Activated B cell treated with CpG ODN at 0.5 μM for 24 hours (primary cell): ENCODE measurements at regions of chr11 and their contacts with region 1.

Region 1: DNA sequence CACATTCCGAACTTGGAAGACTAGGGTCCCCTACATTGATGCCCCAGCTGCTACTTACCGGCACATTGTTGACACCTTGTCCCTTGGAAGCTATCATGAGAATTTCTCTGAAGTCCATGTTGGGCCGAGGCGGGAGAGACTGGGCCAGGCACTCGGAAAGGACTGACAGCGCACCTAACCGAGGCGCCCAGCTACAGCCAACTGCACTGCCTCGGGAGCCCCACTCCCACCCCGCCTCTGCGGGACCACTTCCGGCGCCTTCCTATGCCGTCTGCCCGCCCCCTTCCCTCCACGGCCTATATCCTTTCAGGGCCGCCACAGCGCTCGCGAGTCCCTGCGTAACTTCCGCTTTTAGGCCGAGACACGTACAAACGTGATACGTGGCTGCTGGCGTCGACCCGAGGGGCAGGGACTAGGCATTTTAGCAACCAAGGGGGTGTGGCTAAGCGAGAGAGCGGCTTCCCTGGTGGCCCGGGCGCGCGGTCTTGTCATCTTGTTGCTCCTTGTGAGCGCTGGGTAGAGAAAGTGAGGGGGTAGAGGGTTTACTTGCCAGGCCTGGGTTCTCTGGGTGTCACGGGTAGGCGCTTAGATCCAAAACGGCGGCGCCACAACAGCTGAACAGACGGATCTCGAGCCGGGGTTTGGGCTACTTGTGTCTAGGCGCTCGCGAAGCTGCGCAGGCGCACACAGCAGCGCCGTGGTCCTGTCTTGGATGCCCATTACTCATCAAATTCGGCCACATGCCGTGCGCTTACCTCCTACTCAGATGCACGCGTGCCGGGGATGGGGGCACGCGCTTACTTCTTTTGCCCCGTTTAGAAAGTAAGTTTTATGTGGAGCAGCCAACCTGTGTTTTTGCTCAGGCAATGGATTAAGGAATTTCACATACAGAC is at the start of gene SPTY2D1:
- DNase-seq: peak; percentile 87
- ATAC-seq: peak; percentile 93
- H3K4me3 Mint-ChIP-seq: peak within 1 kb of the TSS; percentile 99
- H3K27ac Mint-ChIP-seq: peak within 1 kb of the TSS; percentile 97
- H3K4me1 Mint-ChIP-seq: peaks cover 25% of the 10 kb centered on the region
- H3K27me3 Mint-ChIP-seq: peaks cover 3% of the 10 kb centered on the region
- CTCF ChIP-seq: no peak
- total RNA-seq, gene SPTY2D1: 22.0 and 22.7 TPM in 2 replicates

Region 2: GRCh38 chr11:16738193-16738946 is 1896.0 kb before region 1 on chr11 and contains the start of gene C11orf58:
- CTCF ChIA-PET with region 1: no interaction called
- POLR2A ChIA-PET with region 1: no interaction called
- intact Hi-C with region 1: loop called (anchors 1 kb)
- DNase-seq: peak; percentile 86
- ATAC-seq: peak; percentile 97
- H3K4me3 Mint-ChIP-seq: peak within 1 kb of the TSS; percentile 74
- H3K27ac Mint-ChIP-seq: no peak within 1 kb of the TSS
- H3K4me1 Mint-ChIP-seq: peaks cover 21% of the 10 kb centered on the region
- H3K27me3 Mint-ChIP-seq: no peaks in the 10 kb centered on the region
- CTCF ChIP-seq: no peak
- total RNA-seq, gene C11orf58: 112 and 130 TPM in 2 replicates

Region 3: GRCh38 chr11:18105802-18106574 is 528.4 kb before region 1 on chr11 and contains the start of gene SAAL1:
- CTCF ChIA-PET with region 1: interaction called, 3 read pairs
- POLR2A ChIA-PET with region 1: interaction called, 3 read pairs
- intact Hi-C with region 1: loop called (anchors 2 kb)
- DNase-seq: peak; percentile 91
- ATAC-seq: peak; percentile 97
- H3K4me3 Mint-ChIP-seq: peak within 1 kb of the TSS; percentile 91
- H3K27ac Mint-ChIP-seq: peak within 1 kb of the TSS; percentile 76
- H3K4me1 Mint-ChIP-seq: peaks cover 28% of the 10 kb centered on the region
- H3K27me3 Mint-ChIP-seq: peaks cover 14% of the 10 kb centered on the region
- CTCF ChIP-seq: no peak
- total RNA-seq, gene SAAL1: 34.4 and 39.7 TPM in 2 replicates

Region 4: DNA sequence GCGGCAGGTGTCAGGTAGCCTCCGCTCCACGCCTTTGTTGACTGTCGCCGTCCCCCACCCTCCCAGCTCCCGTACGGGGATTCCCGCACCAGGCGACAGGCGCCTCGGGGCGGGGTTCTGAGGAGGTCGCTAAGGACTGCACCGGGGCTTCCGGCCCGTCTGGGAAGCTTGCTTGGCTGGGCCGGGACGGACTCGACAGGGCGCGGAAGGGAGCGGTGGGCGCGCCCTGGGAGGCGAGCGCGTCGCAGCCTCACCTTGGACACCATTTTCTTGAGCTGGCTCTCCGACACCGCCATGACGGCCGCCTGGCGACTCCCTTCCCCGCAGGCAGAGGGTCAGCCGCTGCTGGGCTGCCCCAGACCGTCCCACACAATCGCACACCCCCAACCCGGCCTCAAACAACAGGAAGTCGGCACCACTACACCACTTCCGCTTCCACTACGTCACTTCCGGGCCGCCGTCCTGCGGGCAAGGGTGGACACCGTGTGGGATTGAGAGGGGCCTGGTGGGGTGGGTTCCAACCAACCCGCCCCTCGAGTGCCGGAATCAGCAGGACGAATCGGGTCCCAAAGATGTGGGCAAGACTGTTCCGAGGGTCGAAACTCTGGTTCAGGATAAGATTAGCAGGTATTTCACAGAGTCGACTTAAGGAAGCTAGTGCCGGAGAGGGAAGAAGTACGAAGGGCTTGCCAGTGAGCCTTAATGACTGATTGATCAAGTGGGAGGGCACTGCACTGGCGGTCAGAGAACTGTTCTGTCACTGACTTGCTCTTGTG is 107.7 kb before region 1 on chr11 and contains the start of gene TSG101:
- CTCF ChIA-PET with region 1: no interaction called
- POLR2A ChIA-PET with region 1: interaction called, 37 read pairs
- intact Hi-C with region 1: loop called (anchors 1 kb)
- DNase-seq: peak; percentile 95
- ATAC-seq: peak; percentile 84
- H3K4me3 Mint-ChIP-seq: peak within 1 kb of the TSS; percentile 100
- H3K27ac Mint-ChIP-seq: peak within 1 kb of the TSS; percentile 100
- H3K4me1 Mint-ChIP-seq: peaks cover 44% of the 10 kb centered on the region
- H3K27me3 Mint-ChIP-seq: no peaks in the 10 kb centered on the region
- CTCF ChIP-seq: no peak
- total RNA-seq, gene TSG101: 45.3 and 47.2 TPM in 2 replicates

Region 5: DNA sequence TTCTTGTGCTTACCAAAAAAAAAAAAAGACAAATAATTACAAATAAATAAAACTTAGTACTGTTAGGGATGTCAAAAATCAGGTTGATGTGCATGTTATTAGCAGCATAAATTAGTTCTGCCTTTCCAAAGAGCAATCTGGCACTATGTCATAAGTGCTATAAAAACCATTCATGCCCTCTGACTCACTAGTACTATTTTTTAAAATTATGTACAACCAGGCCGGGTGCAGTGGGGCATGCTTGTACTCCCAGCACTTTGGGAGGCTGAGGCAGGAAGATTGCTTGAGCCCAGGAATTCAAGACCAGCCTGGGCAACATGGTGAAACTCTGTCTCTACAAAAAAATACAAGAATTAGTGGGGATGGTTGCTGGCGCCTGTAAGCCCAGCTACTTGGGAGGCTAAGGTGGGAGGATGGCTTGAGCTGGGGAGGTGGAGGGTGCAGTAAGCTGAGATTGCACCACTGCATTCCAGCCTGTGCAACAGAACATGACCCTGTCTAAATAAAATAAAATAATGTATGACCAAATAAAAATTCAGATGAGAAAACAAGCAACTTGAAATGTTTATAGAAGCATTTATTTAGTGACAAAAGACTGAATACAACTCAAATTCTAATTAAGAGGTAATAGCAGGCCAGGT is 71.2 kb before region 1 on chr11:
- CTCF ChIA-PET with region 1: no interaction called
- POLR2A ChIA-PET with region 1: no interaction called
- intact Hi-C with region 1: no loop called
- DNase-seq: no peak
- ATAC-seq: no peak
- H3K4me3 Mint-ChIP-seq: no peak overlapping the region
- H3K27ac Mint-ChIP-seq: no peak overlapping the region
- H3K4me1 Mint-ChIP-seq: no peaks in the 10 kb centered on the region
- H3K27me3 Mint-ChIP-seq: no peaks in the 10 kb centered on the region
- CTCF ChIP-seq: no peak

Region 6: DNA sequence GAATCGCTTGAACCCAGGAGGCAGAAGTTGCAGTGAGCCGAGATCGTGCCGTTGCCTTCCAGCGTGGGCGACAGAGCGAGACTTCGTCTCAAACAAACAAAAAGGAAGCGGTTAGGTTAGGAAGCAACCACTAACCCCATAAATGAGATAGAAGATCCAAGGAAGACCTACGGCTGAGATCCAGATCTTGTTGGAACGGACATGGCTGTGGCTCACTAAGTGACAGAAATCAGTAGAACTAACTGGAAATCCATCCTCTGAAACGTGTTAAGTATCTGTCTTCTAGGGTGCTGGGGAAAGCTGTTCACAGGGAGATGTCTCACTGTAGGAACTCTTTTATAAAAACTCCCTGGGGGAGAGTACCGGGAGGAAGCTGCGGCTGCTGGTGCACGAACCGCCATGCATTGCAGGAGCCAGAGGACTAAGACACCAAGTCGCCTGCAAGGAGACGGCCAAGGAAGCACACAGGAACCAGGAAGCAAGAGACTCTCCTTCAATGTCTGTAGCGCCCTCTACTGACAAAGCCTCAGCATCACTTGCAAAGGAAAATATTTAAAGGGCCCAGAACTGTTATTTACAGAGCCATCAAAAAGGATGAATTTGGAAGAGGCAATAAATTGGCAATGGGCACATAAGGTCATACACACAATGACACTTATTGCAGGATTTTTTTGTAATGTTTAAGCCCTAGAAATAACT is 16.6 kb after region 1 on chr11:
- CTCF ChIA-PET with region 1: no interaction called
- POLR2A ChIA-PET with region 1: no interaction called
- intact Hi-C with region 1: loop called (anchors 2 kb)
- DNase-seq: no peak
- ATAC-seq: no peak
- H3K4me3 Mint-ChIP-seq: peak overlapping the region; percentile 28
- H3K27ac Mint-ChIP-seq: no peak overlapping the region
- H3K4me1 Mint-ChIP-seq: peaks cover 4% of the 10 kb centered on the region
- H3K27me3 Mint-ChIP-seq: no peaks in the 10 kb centered on the region
- CTCF ChIP-seq: no peak

Region 7: GRCh38 chr11:18721561-18722292 is 87.3 kb after region 1 on chr11:
- CTCF ChIA-PET with region 1: no interaction called
- POLR2A ChIA-PET with region 1: interaction called, 5 read pairs
- intact Hi-C with region 1: loop called (anchors 1 kb)
- DNase-seq: peak; percentile 45
- ATAC-seq: peak; percentile 56
- H3K4me3 Mint-ChIP-seq: peak overlapping the region; percentile 92
- H3K27ac Mint-ChIP-seq: peak overlapping the region; percentile 46
- H3K4me1 Mint-ChIP-seq: peaks cover 12% of the 10 kb centered on the region
- H3K27me3 Mint-ChIP-seq: no peaks in the 10 kb centered on the region
- CTCF ChIP-seq: peak; percentile 39